ENCODE measurements at regions of chr11 and their contacts with region 1.

Region 1: DNA sequence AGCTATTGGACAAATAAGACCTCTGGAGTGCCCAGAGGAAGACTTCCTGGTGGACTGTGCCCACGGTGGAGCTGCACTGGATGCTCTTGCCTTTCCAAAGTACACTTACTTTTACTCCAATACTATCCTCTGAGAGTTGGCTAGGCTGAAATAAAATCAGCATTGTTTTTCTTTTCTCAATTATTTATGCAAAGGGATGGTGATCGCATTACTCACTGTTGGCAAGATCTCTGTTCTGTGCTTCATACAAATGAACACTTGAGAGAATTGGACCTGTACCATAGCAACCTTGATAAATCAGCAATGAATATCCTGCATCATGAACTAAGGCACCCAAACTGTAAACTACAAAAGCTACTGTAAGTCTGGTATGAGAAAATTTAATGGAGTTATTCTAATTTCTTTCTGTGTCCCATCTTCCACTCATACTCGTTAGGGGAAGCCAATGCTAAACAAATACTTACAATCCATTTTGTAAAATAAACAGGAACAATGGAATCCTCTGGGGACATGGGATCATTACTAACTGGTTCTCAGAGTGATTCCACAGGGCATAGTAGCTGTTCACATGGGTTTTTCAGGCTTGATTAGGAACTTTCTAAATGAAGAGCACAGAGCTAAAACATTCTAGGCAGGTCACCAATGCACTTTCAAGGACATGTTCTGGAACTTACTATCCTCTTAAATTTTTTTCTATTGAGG is 26.3 kb downstream of the NLRP14 start:
- DNase-seq: peak; percentile 70
- H3K4me3 ChIP-seq: no peak overlapping the region
- H3K27ac ChIP-seq: peak overlapping the region; percentile 32
- H3K4me1 ChIP-seq: peaks cover 4% of the 10 kb centered on the region
- H3K27me3 ChIP-seq: no peaks in the 10 kb centered on the region
- CTCF ChIP-seq: no peak
- POLR2A ChIP-seq: no peak

Region 2: DNA sequence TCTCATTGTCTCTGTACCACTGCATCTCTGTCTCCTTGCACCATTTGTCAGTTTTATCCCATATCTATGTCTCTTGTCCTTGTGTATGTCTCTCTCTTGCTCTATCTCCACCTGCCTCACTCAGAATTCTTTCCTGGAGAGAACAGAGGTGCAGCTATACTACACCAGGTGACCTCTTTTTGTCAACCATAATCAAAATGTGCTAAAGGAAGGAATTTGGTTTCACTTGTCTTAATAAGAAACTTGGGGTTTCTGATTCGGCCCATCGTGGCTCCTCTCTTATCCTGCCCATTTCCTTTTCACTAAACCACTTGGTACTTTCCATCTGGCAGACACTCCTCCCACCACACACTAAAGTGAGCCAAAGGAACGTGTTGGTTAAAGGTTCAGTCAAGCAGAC is 843.3 kb before region 1 on chr11:
- CTCF ChIA-PET with region 1: no interaction called
- POLR2A ChIA-PET with region 1: no interaction called
- dilution Hi-C with region 1: no loop called
- intact Hi-C with region 1: no loop called
- DNase-seq: no peak
- H3K4me3 ChIP-seq: no peak overlapping the region
- H3K27ac ChIP-seq: no peak overlapping the region
- H3K4me1 ChIP-seq: no peaks in the 10 kb centered on the region
- H3K27me3 ChIP-seq: no peaks in the 10 kb centered on the region
- CTCF ChIP-seq: no peak
- POLR2A ChIP-seq: no peak

Region 3: GRCh38 chr11:7004482-7004881 is 42.1 kb before region 1 on chr11:
- CTCF ChIA-PET with region 1: no interaction called
- POLR2A ChIA-PET with region 1: no interaction called
- dilution Hi-C with region 1: no loop called
- intact Hi-C with region 1: loop called (anchors 1 kb)
- DNase-seq: peak; percentile 57
- H3K4me3 ChIP-seq: no peak overlapping the region
- H3K27ac ChIP-seq: peak overlapping the region; percentile 20
- H3K4me1 ChIP-seq: peaks cover 21% of the 10 kb centered on the region
- H3K27me3 ChIP-seq: no peaks in the 10 kb centered on the region
- CTCF ChIP-seq: no peak
- POLR2A ChIP-seq: no peak